H1 (cell line): ENCODE measurements at regions of chr12 and their contacts with region 1.

Region 1: DNA sequence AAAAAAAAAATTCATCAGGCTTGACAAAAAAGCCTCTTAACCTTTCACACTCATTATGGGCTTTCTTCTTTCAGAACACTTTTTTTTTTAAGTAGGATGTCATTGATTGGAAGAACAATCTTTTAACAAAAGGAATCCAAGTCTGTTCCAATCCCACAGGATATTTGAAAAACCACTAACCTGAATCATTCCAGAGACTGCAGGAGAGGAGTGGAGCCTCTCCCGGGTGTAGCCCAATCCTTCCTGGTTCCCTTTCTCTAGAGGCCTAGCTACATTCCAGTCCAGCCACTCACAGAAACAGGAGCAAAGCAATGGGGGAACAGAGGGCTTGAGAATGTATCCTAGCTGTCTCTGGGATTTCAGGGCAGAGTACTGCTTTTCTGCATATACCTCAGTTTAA is 4.3 kb downstream of the MFAP5 start:
- DNase-seq: no peak
- H3K4me3 ChIP-seq: no peak overlapping the region
- H3K27ac ChIP-seq: no peak overlapping the region
- H3K4me1 ChIP-seq: no peaks in the 10 kb centered on the region; a peak in 1 of 7 replicates
- H3K27me3 ChIP-seq: no peaks in the 10 kb centered on the region
- CTCF ChIP-seq: no peak
- EP300 ChIP-seq: no peak
- POLR2A ChIP-seq: no peak
- RAD21 ChIP-seq: no peak

Region 2: GRCh38 chr12:8519171-8519570 is 139.2 kb before region 1 on chr12:
- CTCF ChIA-PET with region 1: no interaction called
- POLR2A ChIA-PET with region 1: no interaction called
- DNase-seq: no peak
- H3K4me3 ChIP-seq: no peak overlapping the region
- H3K27ac ChIP-seq: no peak overlapping the region
- H3K4me1 ChIP-seq: no peaks in the 10 kb centered on the region
- H3K27me3 ChIP-seq: no peaks in the 10 kb centered on the region
- CTCF ChIP-seq: no peak
- EP300 ChIP-seq: no peak
- POLR2A ChIP-seq: no peak
- RAD21 ChIP-seq: no peak

Region 3: GRCh38 chr12:8668441-8668840 is 10.1 kb after region 1 on chr12:
- CTCF ChIA-PET with region 1: interaction called, 20 read pairs
- POLR2A ChIA-PET with region 1: no interaction called
- DNase-seq: no peak
- H3K4me3 ChIP-seq: no peak overlapping the region
- H3K27ac ChIP-seq: no peak overlapping the region
- H3K4me1 ChIP-seq: no peaks in the 10 kb centered on the region
- H3K27me3 ChIP-seq: no peaks in the 10 kb centered on the region
- CTCF ChIP-seq: no peak
- EP300 ChIP-seq: no peak
- POLR2A ChIP-seq: no peak
- RAD21 ChIP-seq: no peak

Region 4: DNA sequence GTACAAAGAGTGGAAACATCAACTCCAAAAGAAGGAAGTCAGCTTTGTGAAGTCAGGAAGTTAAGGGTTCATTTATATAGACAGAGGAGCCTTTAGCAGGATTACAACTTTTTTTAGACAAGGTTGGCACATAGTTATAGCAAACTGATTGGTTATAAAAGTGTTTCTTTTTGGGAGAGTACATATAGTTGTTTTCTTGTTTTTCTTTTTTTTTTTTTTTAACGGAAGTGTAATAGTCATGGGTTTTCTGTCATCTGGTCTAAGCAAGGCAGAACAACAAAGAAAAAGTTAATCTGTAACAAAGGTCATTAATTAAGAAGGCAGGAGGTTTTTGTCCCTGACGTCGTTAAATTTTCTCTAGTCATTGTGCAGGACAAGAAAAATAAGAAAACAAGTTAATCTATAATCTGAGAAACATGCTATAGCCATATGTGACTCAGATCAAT is 17.3 kb after region 1 on chr12:
- CTCF ChIA-PET with region 1: interaction called, 20 read pairs
- POLR2A ChIA-PET with region 1: no interaction called
- DNase-seq: no peak
- H3K4me3 ChIP-seq: no peak overlapping the region
- H3K27ac ChIP-seq: no peak overlapping the region
- H3K4me1 ChIP-seq: peaks cover 0 to 4% (median 0%) of the 10 kb centered on the region in 4 experiments; a peak in 1 of 7 replicates
- H3K27me3 ChIP-seq: no peaks in the 10 kb centered on the region
- CTCF ChIP-seq: no peak
- EP300 ChIP-seq: no peak
- POLR2A ChIP-seq: no peak
- RAD21 ChIP-seq: no peak

Region 5: DNA sequence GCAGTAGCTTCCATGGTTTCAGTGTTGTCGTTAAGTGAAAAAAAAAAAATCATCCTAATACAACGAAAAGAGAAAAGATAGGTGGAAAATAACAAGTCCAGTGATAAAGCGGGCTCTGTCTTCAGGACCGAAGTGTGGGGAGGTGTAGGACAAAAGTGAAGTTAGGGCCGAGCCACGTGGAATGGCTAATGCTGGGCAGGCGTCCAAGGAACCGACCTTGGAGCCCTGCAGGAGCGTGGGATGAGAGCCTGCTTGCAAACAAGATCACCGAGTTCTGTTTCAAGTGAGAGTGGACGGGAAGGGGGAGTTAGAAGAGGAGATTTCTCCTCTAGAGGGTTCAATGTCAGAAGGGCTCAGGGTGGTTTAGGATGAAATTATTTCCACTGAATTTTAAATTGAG is 186.3 kb after region 1 on chr12:
- CTCF ChIA-PET with region 1: no interaction called
- POLR2A ChIA-PET with region 1: no interaction called
- DNase-seq: no peak
- H3K4me3 ChIP-seq: no peak overlapping the region
- H3K27ac ChIP-seq: no peak overlapping the region
- H3K4me1 ChIP-seq: no peaks in the 10 kb centered on the region; a peak in 1 of 7 replicates
- H3K27me3 ChIP-seq: no peaks in the 10 kb centered on the region
- CTCF ChIP-seq: no peak
- EP300 ChIP-seq: no peak
- POLR2A ChIP-seq: no peak
- RAD21 ChIP-seq: no peak